ENCODE measurements at regions of chr18 and their contacts with region 1.

Region 1: GRCh38 chr18:50356036-50356945 is 18.6 kb upstream of the SKA1 start:
- DNase-seq: no peak
- ATAC-seq: peak; percentile 74
- H3K4me3 Mint-ChIP-seq: no peak overlapping the region
- H3K27ac Mint-ChIP-seq: no peak overlapping the region
- H3K4me1 Mint-ChIP-seq: peaks cover 11% of the 10 kb centered on the region
- H3K27me3 Mint-ChIP-seq: peaks cover 28% of the 10 kb centered on the region
- CTCF ChIP-seq: no peak

Region 2: DNA sequence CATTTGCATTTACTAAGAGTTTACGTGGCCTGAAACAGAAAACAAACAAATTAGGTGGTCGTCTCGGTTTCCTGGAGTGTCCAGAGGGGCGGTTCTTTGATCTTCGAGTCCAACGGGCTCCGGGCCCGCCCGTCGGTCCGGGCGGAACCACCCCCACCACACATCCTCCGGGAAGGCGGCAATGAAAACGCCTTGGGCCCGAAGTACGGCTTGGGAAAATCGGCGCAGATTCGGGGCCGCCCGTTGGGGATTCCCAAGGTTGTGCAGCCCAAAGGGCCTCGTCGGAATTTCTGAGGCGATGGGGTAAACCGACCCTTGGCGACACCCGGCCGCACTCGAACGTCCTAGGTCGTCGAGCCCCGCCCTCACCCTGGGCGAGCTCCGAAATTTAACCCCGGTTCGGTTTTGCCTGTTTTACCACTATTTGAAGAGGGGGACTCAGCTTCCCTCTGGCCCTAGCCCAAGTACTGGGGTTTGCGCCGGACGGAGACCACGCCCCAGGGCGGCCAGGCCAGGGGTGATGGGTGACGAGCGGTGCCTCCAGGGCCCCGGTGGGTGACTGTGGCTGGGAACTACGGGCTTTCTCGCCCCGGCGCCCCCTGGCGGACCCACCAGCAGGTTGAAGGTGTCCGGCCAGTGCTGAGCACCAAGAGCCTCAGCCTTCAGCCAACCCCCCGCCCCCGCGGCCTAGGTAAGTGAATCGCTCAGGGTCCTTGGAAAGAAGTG is 88.1 kb before region 1 on chr18:
- CTCF ChIA-PET with region 1: interaction called, 12 read pairs
- POLR2A ChIA-PET with region 1: no interaction called
- DNase-seq: peak; percentile 95
- ATAC-seq: peak; percentile 93
- H3K4me3 Mint-ChIP-seq: peak overlapping the region; percentile 89
- H3K27ac Mint-ChIP-seq: no peak overlapping the region
- H3K4me1 Mint-ChIP-seq: peaks cover 16% of the 10 kb centered on the region
- H3K27me3 Mint-ChIP-seq: peaks cover 11% of the 10 kb centered on the region
- CTCF ChIP-seq: peak; percentile 72

Region 3: GRCh38 chr18:50297621-50298442 is 58.5 kb before region 1 on chr18:
- CTCF ChIA-PET with region 1: interaction called, 10 read pairs
- POLR2A ChIA-PET with region 1: no interaction called
- DNase-seq: peak; percentile 80
- ATAC-seq: peak; percentile 98
- H3K4me3 Mint-ChIP-seq: peak overlapping the region; percentile 81
- H3K27ac Mint-ChIP-seq: no peak overlapping the region
- H3K4me1 Mint-ChIP-seq: 0 out of 2 replicates have a peak, but pooled peaks cover 6% of the 10 kb centered on the region
- H3K27me3 Mint-ChIP-seq: peaks cover 72% of the 10 kb centered on the region
- CTCF ChIP-seq: no peak

Region 4: GRCh38 chr18:50374753-50375391 is 18.6 kb after region 1 on chr18 and contains the start of gene SKA1:
- CTCF ChIA-PET with region 1: interaction called, 14 read pairs
- POLR2A ChIA-PET with region 1: no interaction called
- DNase-seq: peak; percentile 95
- ATAC-seq: peak; percentile 97
- H3K4me3 Mint-ChIP-seq: peak within 1 kb of the TSS; percentile 86
- H3K27ac Mint-ChIP-seq: peak within 1 kb of the TSS; percentile 91
- H3K4me1 Mint-ChIP-seq: peaks cover 20% of the 10 kb centered on the region
- H3K27me3 Mint-ChIP-seq: peaks cover 5% of the 10 kb centered on the region
- CTCF ChIP-seq: no peak
- total RNA-seq, gene SKA1: 15.7 to 18.6 TPM (median 18.1 TPM) in 3 replicates

Region 5: DNA sequence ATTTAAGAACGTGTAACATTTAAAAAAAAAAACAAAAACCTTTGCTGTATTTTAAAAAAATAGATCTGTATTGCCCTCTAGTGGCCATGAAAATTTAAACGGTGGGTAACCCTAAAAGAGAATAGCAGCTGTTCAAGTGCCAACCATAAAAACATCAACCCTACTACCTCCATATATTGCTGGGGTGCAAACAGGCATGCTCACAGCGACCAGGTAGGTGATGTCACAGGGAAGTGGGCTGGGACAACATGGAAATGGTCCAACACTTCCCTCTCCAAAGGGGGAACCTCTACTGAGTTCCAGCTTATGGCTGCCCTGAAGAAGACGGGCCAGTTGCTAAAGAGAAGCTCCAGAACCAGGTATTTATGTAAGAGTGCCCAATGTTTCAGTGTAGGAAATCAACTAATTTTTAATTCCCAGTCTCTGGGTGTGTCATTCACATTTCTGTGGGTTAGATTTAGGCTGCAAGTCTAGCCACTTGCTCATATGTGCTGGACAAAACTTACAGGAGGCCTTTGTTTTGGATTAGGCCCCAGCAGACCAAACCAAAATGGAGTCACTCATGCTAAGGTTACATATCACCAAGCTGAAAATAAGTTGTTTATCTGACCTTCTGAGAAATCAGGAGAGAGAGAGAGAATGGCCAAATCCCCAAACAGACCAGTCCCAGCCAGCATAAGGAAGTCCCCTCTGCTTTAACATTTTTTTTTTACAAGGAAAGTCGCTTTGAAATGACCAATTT is 73.1 kb after region 1 on chr18:
- CTCF ChIA-PET with region 1: interaction called, 28 read pairs
- POLR2A ChIA-PET with region 1: interaction called, 3 read pairs
- DNase-seq: no peak
- ATAC-seq: 0 out of 2 replicates have a peak, but pooled peaks have one; percentile 28
- H3K4me3 Mint-ChIP-seq: no peak overlapping the region
- H3K27ac Mint-ChIP-seq: no peak overlapping the region
- H3K4me1 Mint-ChIP-seq: no peaks in the 10 kb centered on the region
- H3K27me3 Mint-ChIP-seq: peaks cover 5% of the 10 kb centered on the region; the same call in 1 of the 2 replicates
- CTCF ChIP-seq: peak; percentile 18; the same call in 1 of the 2 replicates